ENCODE measurements at regions of chr16 and their contacts with region 1.

Region 1: DNA sequence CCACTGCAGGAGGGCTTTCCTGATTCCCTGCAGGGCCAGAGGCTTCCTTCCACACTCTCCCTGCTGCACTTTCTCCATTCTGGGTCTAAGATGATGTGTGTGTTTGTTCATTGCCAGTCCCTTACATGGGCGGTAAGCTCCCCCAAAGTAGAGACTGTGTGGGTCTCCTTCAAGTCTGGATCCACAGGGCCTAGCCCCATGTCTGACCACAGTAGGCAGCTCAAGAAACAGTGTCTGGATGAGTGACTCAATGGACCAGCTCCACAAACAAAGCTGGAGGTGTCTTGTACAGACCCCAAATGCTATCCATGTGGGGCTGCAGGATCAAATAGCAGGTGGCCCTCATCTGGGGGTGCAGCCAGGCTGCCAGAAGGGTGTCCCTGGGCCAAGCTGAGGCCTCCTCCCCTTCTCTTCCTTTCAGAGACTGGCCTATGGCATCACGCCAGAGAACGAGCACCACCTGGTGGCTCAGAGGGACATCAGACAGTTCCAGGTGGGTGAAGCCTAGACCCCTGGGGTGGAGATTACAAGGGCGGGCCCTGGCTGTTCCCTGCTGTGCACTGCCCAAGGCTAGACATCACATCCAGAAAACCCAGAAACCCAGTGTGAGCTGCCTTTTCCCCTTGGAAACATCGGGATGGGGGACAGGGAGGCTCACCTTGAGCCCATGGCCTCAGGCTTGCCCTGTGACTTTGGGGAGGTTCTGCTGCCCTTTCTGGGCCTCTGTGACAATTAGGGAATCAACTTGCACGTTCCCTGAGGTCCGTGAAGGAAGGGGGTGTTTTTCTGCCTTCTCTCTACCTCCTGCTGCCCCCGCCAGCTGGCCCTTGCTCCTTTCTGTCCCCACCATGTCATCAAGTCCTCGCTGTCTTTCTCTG is 45.9 kb downstream of the SLC6A2 start:
- DNase-seq: no peak
- H3K4me3 ChIP-seq: no peak overlapping the region
- H3K27ac ChIP-seq: no peak overlapping the region
- H3K4me1 ChIP-seq: peaks cover 0 to 14% (median 6%) of the 10 kb centered on the region in 4 donors
- H3K27me3 ChIP-seq: peaks cover 0 to 13% (median 0%) of the 10 kb centered on the region in 4 donors
- CTCF ChIP-seq: peak; percentile 56 to 66 (median 58)
- EP300 ChIP-seq: no peak
- POLR2A ChIP-seq: no peak

Region 2: DNA sequence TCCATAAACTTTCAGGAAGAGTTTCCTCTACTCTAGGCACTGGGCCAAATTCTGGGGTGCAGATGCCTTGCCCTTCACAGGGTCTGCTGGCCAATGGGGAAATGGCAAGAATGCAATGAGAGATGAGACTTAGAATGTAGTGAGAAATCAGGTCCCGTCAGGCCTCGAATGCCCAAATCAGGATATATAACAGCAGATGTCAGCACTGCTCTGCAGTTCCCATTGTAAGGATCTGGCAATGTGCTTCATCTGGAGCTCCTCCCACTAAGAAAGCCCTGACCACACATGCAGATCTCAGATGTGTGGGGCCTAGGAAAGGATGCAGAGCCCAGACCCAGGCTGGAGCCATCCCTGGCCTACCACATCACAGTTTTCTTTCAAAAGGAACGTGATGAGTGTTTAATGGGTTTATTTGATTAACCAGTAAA is 206.7 kb before region 1 on chr16:
- intact Hi-C with region 1: loop called (anchors 2 kb)
- DNase-seq: peak; percentile 90
- H3K4me3 ChIP-seq: no peak overlapping the region
- H3K27ac ChIP-seq: no peak overlapping the region
- H3K4me1 ChIP-seq: peaks cover 10 to 42% (median 34%) of the 10 kb centered on the region in 4 donors
- H3K27me3 ChIP-seq: peaks cover 0 to 3% (median 0%) of the 10 kb centered on the region in 4 donors
- CTCF ChIP-seq: peak; percentile 43 to 51 (median 51)
- EP300 ChIP-seq: no peak
- POLR2A ChIP-seq: no peak

Region 3: DNA sequence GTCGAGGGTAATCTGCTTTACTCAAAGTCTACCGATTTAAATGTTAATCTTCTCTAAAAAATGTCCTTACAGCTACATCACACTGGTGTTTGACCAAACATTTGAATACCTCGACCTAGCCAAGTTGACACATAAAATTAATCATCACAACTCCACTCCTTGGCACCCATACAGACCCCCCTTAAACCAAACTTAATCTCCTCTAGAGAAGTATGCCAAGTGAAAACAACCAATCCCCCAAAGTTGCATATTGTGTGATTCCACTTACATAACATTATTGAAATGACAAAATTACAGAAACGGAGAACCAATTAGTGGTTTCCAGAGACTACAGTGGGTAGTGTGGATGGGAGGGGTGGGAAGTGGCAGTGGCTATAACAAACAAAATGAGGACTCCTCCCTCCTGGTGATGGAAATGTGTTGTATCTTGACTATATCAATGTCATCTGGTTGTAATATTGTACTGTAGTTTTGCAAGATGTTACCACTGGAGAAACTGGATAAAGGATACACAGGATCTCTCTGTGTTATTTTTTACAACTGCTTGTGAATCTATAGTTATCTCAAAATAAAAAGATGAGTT is 95.8 kb before region 1 on chr16:
- intact Hi-C with region 1: no loop called
- DNase-seq: no peak
- H3K4me3 ChIP-seq: no peak overlapping the region
- H3K27ac ChIP-seq: no peak overlapping the region
- H3K4me1 ChIP-seq: peaks cover 0 to 12% (median 7%) of the 10 kb centered on the region in 4 donors
- H3K27me3 ChIP-seq: no peaks in the 10 kb centered on the region
- CTCF ChIP-seq: no peak
- EP300 ChIP-seq: no peak
- POLR2A ChIP-seq: no peak

Region 4: DNA sequence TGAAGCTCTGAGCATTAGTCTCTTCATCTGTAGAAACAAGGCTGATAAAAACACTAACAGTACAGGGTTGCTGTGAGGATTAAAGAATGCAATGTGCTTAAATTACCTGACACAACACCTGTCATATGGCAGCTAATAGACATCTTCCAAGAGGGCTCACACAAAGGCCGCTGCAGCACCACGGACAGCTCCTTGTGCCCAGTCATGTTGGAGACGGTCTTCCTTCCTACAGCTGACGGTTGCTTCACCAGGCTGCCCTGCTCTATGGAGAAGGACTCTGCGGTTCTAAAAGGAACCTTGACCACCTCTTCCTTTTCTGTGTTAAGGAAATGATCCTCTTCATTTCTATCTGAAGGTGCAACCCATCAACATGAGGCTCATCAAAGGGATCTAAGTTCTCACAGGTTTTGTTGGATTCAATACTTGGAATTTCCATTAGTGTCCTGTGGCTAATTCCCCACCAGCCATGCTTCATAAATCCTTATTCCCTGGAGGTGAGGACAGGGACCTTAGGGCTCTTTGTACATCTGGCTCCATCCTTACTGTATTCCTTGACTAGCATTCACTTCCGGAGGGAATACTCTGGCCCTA is 312.4 kb after region 1 on chr16:
- intact Hi-C with region 1: no loop called
- DNase-seq: no peak
- H3K4me3 ChIP-seq: no peak overlapping the region
- H3K27ac ChIP-seq: no peak overlapping the region
- H3K4me1 ChIP-seq: no peaks in the 10 kb centered on the region
- H3K27me3 ChIP-seq: peaks cover 0 to 21% (median 0%) of the 10 kb centered on the region in 4 donors
- CTCF ChIP-seq: no peak
- EP300 ChIP-seq: no peak
- POLR2A ChIP-seq: no peak

Measured in esophagus muscularis mucosa (tissue), 4 donors.